ENCODE measurements at regions of chr1 and their contacts with region 1.

Region 1: DNA sequence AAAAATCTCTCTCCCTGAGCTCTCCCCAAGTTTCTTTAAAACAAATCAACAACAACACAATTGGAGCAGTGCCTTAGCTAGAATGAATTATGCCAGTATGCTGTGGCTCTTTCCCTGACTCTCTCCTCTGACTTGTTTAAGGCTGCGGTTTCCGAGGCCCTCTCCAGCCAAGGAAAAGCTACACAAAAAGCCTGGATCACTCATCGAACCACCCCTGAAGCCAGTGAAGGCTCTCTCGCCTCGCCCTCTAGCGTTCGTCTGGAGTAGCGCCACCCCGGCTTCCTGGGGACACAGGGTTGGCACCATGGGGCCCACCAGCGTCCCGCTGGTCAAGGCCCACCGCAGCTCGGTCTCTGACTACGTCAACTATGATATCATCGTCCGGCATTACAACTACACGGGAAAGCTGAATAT is 1.9 kb downstream of the S1PR1 start:
- DNase-seq: peak; percentile 91 to 97
- ATAC-seq: peak; percentile 89
- H3K4me3 ChIP-seq: peak overlapping the region in 1 of 2 donors; percentile 75
- H3K27ac ChIP-seq: no peak overlapping the region
- H3K4me1 ChIP-seq: no peaks in the 10 kb centered on the region
- H3K27me3 ChIP-seq: no peaks in the 10 kb centered on the region

Region 2: DNA sequence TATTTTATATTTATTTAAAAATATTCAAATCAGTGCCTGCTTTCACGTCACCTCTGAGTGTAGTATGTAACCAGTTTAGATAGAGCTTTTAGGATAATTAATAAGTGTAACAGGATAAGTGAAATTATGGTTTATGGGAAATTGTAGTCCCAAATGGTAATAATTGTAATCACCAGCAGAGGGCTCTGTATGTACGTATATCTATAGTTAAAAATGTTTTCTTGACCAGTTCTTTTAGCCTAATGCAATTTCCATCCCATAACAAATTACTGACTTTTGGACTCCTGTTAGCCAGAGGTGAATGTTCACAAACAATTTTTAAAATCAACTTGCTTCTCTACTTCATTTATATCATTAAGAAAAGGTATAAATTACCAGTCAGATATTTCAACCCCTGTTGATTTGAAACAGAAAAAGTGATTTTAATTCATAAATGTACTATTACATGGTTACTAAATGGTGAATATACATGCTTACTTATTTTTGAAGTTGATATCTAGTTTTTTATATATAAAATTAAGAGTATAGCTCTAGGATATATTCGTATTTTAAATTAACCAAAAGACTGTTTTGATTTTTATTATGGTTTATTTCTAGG is 317.5 kb before region 1 on chr1:
- intact Hi-C with region 1: loop called in 1 of 2 experiments (anchors 5 kb)
- DNase-seq: no peak
- ATAC-seq: no peak
- H3K4me3 ChIP-seq: no peak overlapping the region
- H3K27ac ChIP-seq: no peak overlapping the region
- H3K4me1 ChIP-seq: no peaks in the 10 kb centered on the region
- H3K27me3 ChIP-seq: no peaks in the 10 kb centered on the region

Region 3: GRCh38 chr1:101002551-101002950 is 236.1 kb before region 1 on chr1:
- intact Hi-C with region 1: loop called in 1 of 2 experiments (anchors 5 kb)
- DNase-seq: no peak
- ATAC-seq: no peak
- H3K4me3 ChIP-seq: no peak overlapping the region
- H3K27ac ChIP-seq: no peak overlapping the region
- H3K4me1 ChIP-seq: peaks cover 5 to 12% of the 10 kb centered on the region in 2 donors
- H3K27me3 ChIP-seq: no peaks in the 10 kb centered on the region

Region 4: GRCh38 chr1:101136739-101137138 is 101.9 kb before region 1 on chr1:
- intact Hi-C with region 1: loop called in 1 of 2 experiments (anchors 5 kb)
- DNase-seq: no peak
- ATAC-seq: no peak
- H3K4me3 ChIP-seq: no peak overlapping the region
- H3K27ac ChIP-seq: no peak overlapping the region
- H3K4me1 ChIP-seq: peaks cover 2% of the 10 kb centered on the region in 2 donors
- H3K27me3 ChIP-seq: no peaks in the 10 kb centered on the region

Region 5: DNA sequence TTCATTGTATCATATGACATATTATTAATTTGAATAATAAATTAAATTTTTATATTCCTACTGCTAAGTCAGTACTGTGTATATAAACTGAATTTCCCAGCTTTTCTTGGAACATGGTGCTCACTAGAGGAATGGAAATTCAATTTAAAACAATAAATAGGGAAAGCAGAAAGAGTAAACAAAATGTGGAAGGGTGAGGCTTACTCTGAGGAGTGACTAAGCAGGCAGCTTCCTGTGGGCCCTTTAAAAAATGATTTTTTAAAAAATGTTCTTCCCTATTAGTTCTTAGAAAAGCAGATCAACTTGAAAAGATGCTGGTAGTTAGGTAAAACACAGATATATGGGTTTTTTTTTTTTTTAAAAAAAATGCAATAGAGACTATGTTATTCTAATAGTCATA is 51.4 kb before region 1 on chr1:
- intact Hi-C with region 1: loop called in 1 of 2 experiments (anchors 5 kb)
- DNase-seq: no peak
- ATAC-seq: no peak
- H3K4me3 ChIP-seq: no peak overlapping the region
- H3K27ac ChIP-seq: no peak overlapping the region
- H3K4me1 ChIP-seq: peaks cover 0 to 1% of the 10 kb centered on the region in 2 donors
- H3K27me3 ChIP-seq: peaks cover 0 to under 1% of the 10 kb centered on the region in 2 donors

Measured in aorta (tissue), 5 donors.